OCI-LY7 (cell line): ENCODE measurements at regions of chr22 and their contacts with region 1.

Region 1: GRCh38 chr22:42079319-42080251 is at the start of gene SMDT1:
- DNase-seq: peak; percentile 99
- H3K4me3 ChIP-seq: peak within 1 kb of the TSS; percentile 79
- H3K27ac ChIP-seq: peak within 1 kb of the TSS; percentile 70
- H3K4me1 ChIP-seq: peaks cover 15% of the 10 kb centered on the region
- CTCF ChIP-seq: no peak
- total RNA-seq, gene SMDT1: 23.0 and 31.5 TPM in 2 replicates

Region 2: GRCh38 chr22:42052765-42053164 is 26.8 kb before region 1 on chr22:
- CTCF ChIA-PET with region 1: no interaction called
- POLR2A ChIA-PET with region 1: no interaction called
- intact Hi-C with region 1: no loop called
- DNase-seq: no peak
- H3K4me3 ChIP-seq: no peak overlapping the region
- H3K27ac ChIP-seq: no peak overlapping the region
- H3K4me1 ChIP-seq: no peaks in the 10 kb centered on the region
- CTCF ChIP-seq: no peak

Region 3: DNA sequence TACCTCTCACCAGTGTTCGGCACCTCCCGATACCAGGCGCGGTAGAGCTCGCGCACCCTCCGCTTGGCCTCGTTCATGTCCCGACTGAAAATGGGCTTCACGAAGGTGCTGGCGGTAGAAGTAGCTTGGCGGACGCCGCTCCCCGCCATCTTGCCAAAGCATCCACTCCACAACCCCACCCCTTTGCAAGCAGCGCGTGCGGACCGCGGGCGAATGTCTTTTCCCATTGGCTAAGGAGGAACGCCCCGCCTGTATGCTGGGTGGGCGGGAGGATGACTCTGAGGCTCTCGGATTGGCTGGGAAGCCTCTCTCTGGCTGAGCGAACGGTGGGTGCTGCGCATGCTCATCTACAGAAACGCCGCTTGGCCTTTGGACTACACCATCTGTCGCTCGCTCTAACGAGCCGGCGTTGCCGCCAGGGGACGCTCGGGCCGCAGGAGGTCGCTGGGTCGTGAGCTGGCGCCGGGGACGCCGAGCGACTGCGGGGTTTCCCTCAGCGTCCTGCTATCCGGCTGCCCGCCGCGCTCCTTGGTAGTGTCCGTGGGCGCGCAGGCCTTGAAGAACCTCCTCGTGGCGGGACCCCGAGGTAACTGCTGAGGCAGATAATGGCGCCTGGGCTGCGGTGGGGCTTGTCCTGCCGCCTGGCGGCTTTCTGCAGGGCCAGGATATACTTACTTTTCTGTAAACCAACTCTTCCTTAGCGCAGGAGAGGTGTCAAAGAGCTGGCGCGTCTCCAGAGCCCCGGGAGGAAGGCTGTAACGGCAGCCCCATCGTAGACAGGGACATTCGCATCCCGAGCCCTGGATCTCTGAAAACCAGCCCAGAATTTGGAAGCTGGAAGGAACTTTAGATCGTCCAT is 11.2 kb after region 1 on chr22 and contains the start of gene NDUFA6:
- CTCF ChIA-PET with region 1: no interaction called
- POLR2A ChIA-PET with region 1: interaction called, 18 read pairs
- intact Hi-C with region 1: no loop called
- DNase-seq: peak; percentile 99
- H3K4me3 ChIP-seq: peak within 1 kb of the TSS; percentile 84
- H3K27ac ChIP-seq: peak within 1 kb of the TSS; percentile 71
- H3K4me1 ChIP-seq: peaks cover 23% of the 10 kb centered on the region
- CTCF ChIP-seq: peak; percentile 93
- total RNA-seq, gene NDUFA6: 49.8 and 62.4 TPM in 2 replicates

Region 4: DNA sequence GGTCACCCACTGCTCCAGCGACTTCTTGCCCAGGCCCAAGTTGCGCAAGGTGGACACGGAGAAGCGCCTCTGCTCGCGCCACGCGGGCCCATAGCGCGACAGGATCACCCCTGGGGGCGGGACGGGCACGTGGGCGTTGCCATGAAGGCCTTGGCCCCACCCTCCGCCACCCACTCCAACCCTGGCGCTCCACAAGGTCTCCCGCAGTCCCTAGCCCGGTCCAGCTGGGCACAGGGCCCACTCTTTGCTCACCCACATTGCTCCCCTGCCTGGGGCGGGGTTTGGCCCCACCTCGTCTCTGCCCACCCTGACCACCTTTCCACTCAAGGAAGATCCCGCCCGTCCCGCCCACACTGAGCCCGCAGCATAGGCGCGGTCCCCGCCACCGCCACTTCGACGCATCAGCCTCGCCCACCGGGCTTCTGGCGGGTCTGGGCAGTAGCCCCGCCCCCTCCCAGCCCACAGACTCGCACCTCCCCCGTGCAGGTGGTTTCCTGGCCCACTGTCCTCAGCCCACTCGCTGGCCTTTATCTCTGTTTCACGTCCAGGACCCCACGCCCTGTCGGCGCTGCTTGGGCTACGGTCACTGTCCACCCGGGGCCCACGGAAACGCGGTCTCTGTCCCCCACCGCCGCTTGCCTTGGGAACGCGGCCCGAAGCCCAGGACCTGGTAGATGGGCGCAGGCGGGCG is 63.3 kb after region 1 on chr22:
- CTCF ChIA-PET with region 1: no interaction called
- POLR2A ChIA-PET with region 1: no interaction called
- intact Hi-C with region 1: no loop called
- DNase-seq: no peak
- H3K4me3 ChIP-seq: no peak overlapping the region
- H3K27ac ChIP-seq: no peak overlapping the region
- H3K4me1 ChIP-seq: no peaks in the 10 kb centered on the region
- CTCF ChIP-seq: no peak

Region 5: GRCh38 chr22:42396621-42397331 is 317.2 kb after region 1 on chr22:
- CTCF ChIA-PET with region 1: no interaction called
- POLR2A ChIA-PET with region 1: no interaction called
- intact Hi-C with region 1: loop called (anchors 1 kb)
- DNase-seq: peak; percentile 74
- H3K4me3 ChIP-seq: peak overlapping the region; percentile 54
- H3K27ac ChIP-seq: peak overlapping the region; percentile 65
- H3K4me1 ChIP-seq: peaks cover 34% of the 10 kb centered on the region
- CTCF ChIP-seq: peak; percentile 64